ENCODE measurements at regions of chr5 and their contacts with region 1.

Region 1: GRCh38 chr5:132007399-132008165 is 3.9 kb downstream of the ACSL6 start:
- DNase-seq: peak; percentile 89
- ATAC-seq: peak; percentile 50
- H3K4me3 Mint-ChIP-seq: no peak overlapping the region
- H3K27ac Mint-ChIP-seq: no peak overlapping the region
- H3K4me1 Mint-ChIP-seq: peaks cover 34% of the 10 kb centered on the region
- H3K27me3 Mint-ChIP-seq: peaks cover 24% of the 10 kb centered on the region
- CTCF ChIP-seq: peak; percentile 67

Region 2: GRCh38 chr5:131796793-131797693 is 210.5 kb before region 1 on chr5 and contains the start of gene FNIP1:
- CTCF ChIA-PET with region 1: interaction called, 15 read pairs
- POLR2A ChIA-PET with region 1: no interaction called
- DNase-seq: peak; percentile 99
- ATAC-seq: peak; percentile 94
- H3K4me3 Mint-ChIP-seq: peak within 1 kb of the TSS; percentile 97
- H3K27ac Mint-ChIP-seq: peak within 1 kb of the TSS; percentile 92
- H3K4me1 Mint-ChIP-seq: peaks cover 18% of the 10 kb centered on the region
- H3K27me3 Mint-ChIP-seq: peaks cover 25% of the 10 kb centered on the region
- CTCF ChIP-seq: no peak
- total RNA-seq, gene FNIP1: 17.2 to 20.0 TPM (median 19.0 TPM) in 3 replicates

Region 3: DNA sequence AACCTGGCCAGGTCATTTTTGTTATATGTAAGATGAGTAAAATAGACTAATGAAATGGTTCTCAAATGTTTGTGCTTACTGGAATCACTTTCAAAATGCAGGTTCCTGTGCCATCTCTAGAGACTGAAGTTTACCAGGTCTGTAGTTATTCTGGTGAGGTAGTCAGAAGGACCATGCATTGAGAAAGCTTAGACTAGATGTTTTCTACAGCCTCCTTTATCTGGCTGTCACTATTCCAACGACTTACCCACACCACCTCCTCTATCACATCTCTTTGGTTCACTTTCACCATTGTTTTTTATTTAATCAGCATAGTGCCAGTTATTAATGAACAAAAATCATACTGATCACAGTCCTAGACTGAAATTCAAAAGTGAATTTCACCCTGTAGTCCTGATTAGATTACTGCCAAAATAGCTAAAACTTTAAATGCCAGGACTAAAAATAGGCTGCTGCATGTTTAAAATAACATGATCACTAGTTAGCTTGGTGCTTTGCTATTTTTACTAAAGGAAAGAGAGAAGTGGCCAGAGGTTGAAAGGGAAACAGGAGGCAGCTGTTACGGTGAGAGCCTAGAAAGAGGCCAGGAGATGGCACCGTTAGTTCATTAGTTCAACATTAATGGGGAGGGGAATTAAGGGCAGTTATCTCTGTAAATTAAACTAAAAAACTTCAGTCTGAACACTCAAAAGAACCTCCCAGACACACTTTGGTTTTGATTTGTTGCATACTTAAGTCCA is 196.9 kb before region 1 on chr5:
- CTCF ChIA-PET with region 1: interaction called, 72 read pairs
- POLR2A ChIA-PET with region 1: no interaction called
- DNase-seq: peak; percentile 15
- ATAC-seq: peak; percentile 75
- H3K4me3 Mint-ChIP-seq: no peak overlapping the region
- H3K27ac Mint-ChIP-seq: no peak overlapping the region
- H3K4me1 Mint-ChIP-seq: peaks cover 7% of the 10 kb centered on the region
- H3K27me3 Mint-ChIP-seq: no peaks in the 10 kb centered on the region; the same call in 1 of the 2 replicates
- CTCF ChIP-seq: no peak

Region 4: GRCh38 chr5:131899692-131900091 is 107.9 kb before region 1 on chr5:
- CTCF ChIA-PET with region 1: no interaction called
- POLR2A ChIA-PET with region 1: no interaction called
- DNase-seq: no peak
- ATAC-seq: no peak
- H3K4me3 Mint-ChIP-seq: no peak overlapping the region
- H3K27ac Mint-ChIP-seq: no peak overlapping the region
- H3K4me1 Mint-ChIP-seq: no peaks in the 10 kb centered on the region
- H3K27me3 Mint-ChIP-seq: peaks cover 5% of the 10 kb centered on the region; the same call in 1 of the 2 replicates
- CTCF ChIP-seq: no peak

Region 5: GRCh38 chr5:131991593-131992324 is 15.8 kb before region 1 on chr5:
- CTCF ChIA-PET with region 1: interaction called, 11 read pairs
- POLR2A ChIA-PET with region 1: no interaction called
- DNase-seq: no peak
- ATAC-seq: peak; percentile 35; the same call in 1 of the 2 replicates
- H3K4me3 Mint-ChIP-seq: no peak overlapping the region
- H3K27ac Mint-ChIP-seq: no peak overlapping the region
- H3K4me1 Mint-ChIP-seq: peaks cover 19% of the 10 kb centered on the region
- H3K27me3 Mint-ChIP-seq: no peaks in the 10 kb centered on the region; the same call in 1 of the 2 replicates
- CTCF ChIP-seq: no peak

Region 6: DNA sequence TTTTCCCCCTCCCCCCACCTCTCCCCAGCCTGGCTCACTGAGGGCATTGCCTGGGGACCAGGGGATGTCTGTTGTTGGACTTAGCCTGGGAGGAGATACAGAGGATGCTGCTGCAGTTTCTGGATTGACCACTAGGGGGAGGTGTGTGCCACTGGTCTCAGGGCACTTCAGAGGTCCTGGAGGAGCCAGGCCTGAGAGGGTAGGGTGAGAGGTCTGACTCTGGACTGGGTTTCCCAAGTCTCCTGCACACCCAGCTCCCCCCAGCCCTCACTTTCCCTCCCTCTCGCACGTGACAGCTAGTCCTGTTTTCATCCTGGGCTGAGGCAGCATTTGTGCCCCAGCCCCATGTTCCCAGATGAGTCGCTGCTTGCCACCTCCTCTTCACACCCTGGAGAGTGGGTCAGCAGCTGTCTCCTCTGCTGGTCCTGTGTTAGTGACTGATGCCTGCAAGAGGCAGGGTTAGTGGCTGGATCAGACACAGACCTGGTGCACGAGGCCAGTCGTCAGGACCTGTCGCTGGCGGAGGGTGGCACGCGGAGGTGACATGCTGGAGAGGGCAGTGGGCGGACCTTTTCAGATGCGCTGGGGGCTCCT is 57.3 kb after region 1 on chr5:
- CTCF ChIA-PET with region 1: interaction called, 25 read pairs
- POLR2A ChIA-PET with region 1: no interaction called
- DNase-seq: peak; percentile 92
- ATAC-seq: peak; percentile 82
- H3K4me3 Mint-ChIP-seq: no peak overlapping the region
- H3K27ac Mint-ChIP-seq: no peak overlapping the region
- H3K4me1 Mint-ChIP-seq: peaks cover 14% of the 10 kb centered on the region
- H3K27me3 Mint-ChIP-seq: no peaks in the 10 kb centered on the region
- CTCF ChIP-seq: peak; percentile 98

Region 7: GRCh38 chr5:132272311-132273210 is 265.0 kb after region 1 on chr5:
- CTCF ChIA-PET with region 1: no interaction called
- POLR2A ChIA-PET with region 1: no interaction called
- DNase-seq: peak; percentile 89
- ATAC-seq: peak; percentile 65
- H3K4me3 Mint-ChIP-seq: no peak overlapping the region
- H3K27ac Mint-ChIP-seq: peak overlapping the region; percentile 16; the same call in 1 of the 2 replicates
- H3K4me1 Mint-ChIP-seq: peaks cover 16% of the 10 kb centered on the region
- H3K27me3 Mint-ChIP-seq: peaks cover 2% of the 10 kb centered on the region; the same call in 1 of the 2 replicates
- CTCF ChIP-seq: peak; percentile 85